ENCODE measurements at regions of chr12 and their contacts with region 1.

Region 1: DNA sequence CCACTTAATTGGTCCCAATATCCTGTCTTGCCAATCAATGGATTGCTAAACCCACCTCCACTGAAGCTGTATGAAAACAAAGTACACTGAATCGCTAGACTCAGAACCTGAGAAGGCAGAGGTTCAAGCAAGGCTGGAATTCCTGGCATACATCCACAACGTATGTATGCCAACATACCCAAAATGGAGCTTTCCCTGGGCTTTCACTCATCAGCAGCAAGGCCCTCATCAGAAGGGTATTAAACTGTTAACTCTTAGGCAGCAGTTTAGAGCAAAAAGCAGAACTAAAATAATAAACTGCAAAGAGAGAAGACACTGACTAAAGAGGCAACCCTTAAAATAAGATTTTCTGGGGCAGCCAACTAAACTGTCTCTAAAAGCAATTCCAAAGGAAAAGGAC is 13.6 kb downstream of the MED13L start:
- DNase-seq: peak; percentile 23
- ATAC-seq: peak; percentile 45
- H3K4me3 ChIP-seq: no peak overlapping the region
- H3K4me3 Mint-ChIP-seq: peak overlapping the region; percentile 27
- H3K27ac ChIP-seq: no peak overlapping the region
- H3K27ac Mint-ChIP-seq: no peak overlapping the region
- H3K4me1 ChIP-seq: peaks cover 47 to 72% of the 10 kb centered on the region in 2 donors
- H3K4me1 Mint-ChIP-seq: peaks cover 42% of the 10 kb centered on the region
- H3K27me3 ChIP-seq: no peaks in the 10 kb centered on the region
- H3K27me3 Mint-ChIP-seq: no peaks in the 10 kb centered on the region
- CTCF ChIP-seq: no peak

Region 2: GRCh38 chr12:116194935-116195431 is 68.9 kb before region 1 on chr12:
- CTCF ChIA-PET with region 1: no interaction called
- POLR2A ChIA-PET with region 1: no interaction called
- intact Hi-C with region 1: loop called (anchors 5 kb)
- DNase-seq: peak; percentile 84
- ATAC-seq: peak; percentile 84
- H3K4me3 ChIP-seq: peak overlapping the region in 4 of 5 experiments; percentile 4 to 23 (median 14)
- H3K4me3 Mint-ChIP-seq: peak overlapping the region; percentile 79
- H3K27ac ChIP-seq: peak overlapping the region; percentile 76 to 80
- H3K27ac Mint-ChIP-seq: peak overlapping the region; percentile 92
- H3K4me1 ChIP-seq: peaks cover 28 to 45% of the 10 kb centered on the region in 2 donors
- H3K4me1 Mint-ChIP-seq: peaks cover 62% of the 10 kb centered on the region
- H3K27me3 ChIP-seq: no peaks in the 10 kb centered on the region
- H3K27me3 Mint-ChIP-seq: no peaks in the 10 kb centered on the region
- CTCF ChIP-seq: peak; percentile 21

Region 3: DNA sequence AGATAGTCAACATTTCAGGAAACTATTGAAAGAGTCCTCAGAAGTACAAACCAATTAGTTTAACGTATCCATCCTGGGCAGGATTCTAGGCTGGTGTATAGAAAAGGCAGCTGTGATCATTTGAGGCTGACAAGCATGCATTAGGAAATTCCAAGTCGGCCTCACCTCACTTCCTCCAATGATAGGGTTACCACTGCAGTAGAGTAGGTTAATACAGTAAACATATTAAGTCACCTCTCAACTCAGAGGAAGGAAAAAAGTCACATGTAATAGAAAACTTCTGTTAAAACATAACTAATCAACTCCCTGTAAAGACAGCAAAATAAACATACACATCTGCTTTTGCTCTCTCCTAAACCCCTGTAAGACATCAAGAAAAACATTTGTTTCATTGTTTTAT is 19.8 kb before region 1 on chr12:
- CTCF ChIA-PET with region 1: interaction called, 7 read pairs
- POLR2A ChIA-PET with region 1: no interaction called
- intact Hi-C with region 1: loop called (anchors 2 kb)
- DNase-seq: peak; percentile 54
- ATAC-seq: peak; percentile 67
- H3K4me3 ChIP-seq: no peak overlapping the region
- H3K4me3 Mint-ChIP-seq: peak overlapping the region; percentile 24
- H3K27ac ChIP-seq: peak overlapping the region; percentile 17 to 54
- H3K27ac Mint-ChIP-seq: peak overlapping the region; percentile 34
- H3K4me1 ChIP-seq: peaks cover 40 to 55% of the 10 kb centered on the region in 2 donors
- H3K4me1 Mint-ChIP-seq: peaks cover 76% of the 10 kb centered on the region
- H3K27me3 ChIP-seq: no peaks in the 10 kb centered on the region
- H3K27me3 Mint-ChIP-seq: no peaks in the 10 kb centered on the region
- CTCF ChIP-seq: no peak

Region 4: DNA sequence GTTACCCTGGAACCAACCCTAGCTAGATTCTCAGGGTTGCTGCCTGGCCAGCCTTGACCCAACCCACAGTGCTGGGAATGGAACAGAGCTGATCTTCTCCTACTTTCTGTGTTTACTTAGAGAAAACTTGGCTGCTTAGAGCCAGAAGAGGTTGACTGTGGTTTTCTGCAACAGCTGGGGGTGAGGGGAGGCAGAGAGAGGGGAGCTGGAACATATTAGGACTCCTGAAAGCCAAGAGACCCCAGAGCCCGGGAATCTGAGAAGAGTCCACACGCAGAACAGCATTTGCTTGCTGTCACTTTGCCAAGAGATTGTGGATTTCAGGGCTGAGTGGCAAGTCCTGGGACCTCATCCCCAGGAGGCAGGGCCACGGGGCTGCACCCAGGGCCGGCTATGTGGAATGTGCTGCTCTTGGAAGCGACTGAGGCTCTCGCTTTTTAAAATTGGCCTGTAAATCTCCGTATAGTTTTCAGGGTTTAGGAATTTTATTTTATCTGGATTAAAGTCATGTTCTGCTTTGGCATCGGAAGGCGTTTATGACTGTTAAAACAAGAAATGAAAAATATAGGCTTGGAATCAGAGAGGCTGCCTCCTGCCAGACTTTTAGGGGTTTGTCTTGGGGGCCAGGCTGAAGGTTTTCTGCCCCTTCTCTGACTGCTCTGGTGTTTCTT is 35.9 kb after region 1 on chr12:
- CTCF ChIA-PET with region 1: no interaction called
- POLR2A ChIA-PET with region 1: no interaction called
- intact Hi-C with region 1: no loop called
- DNase-seq: no peak
- ATAC-seq: no peak
- H3K4me3 ChIP-seq: no peak overlapping the region
- H3K4me3 Mint-ChIP-seq: no peak overlapping the region
- H3K27ac ChIP-seq: no peak overlapping the region
- H3K27ac Mint-ChIP-seq: no peak overlapping the region
- H3K4me1 ChIP-seq: peaks cover 0 to 5% of the 10 kb centered on the region in 2 donors
- H3K4me1 Mint-ChIP-seq: peaks cover 7% of the 10 kb centered on the region
- H3K27me3 ChIP-seq: no peaks in the 10 kb centered on the region
- H3K27me3 Mint-ChIP-seq: peaks cover 4% of the 10 kb centered on the region
- CTCF ChIP-seq: no peak